T-cell (primary cell): ENCODE measurements at regions of chr4 and their contacts with region 1.

Region 1: DNA sequence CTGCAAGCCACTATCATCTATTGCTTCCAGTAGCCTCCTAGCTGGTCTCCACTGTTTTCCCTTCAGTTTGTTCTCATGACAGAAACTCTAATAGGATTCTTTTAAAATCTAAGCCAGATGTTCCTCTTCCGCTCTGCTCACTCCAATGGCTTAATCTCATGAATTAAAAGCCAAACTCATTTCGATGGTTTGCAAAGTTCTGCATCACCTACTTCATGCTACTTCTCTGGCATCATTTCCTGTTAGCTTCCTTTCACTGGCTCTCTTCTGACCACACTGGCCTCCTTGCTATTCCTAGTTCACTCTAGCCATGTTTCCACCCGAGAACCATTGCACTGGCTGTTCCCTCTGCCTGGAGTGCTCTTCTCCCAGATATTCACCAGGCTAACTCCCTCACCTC is 102.0 kb upstream of the LSM6 start:
- DNase-seq: no peak
- ATAC-seq: no peak
- H3K4me3 ChIP-seq: no peak overlapping the region
- H3K4me3 Mint-ChIP-seq: no peak overlapping the region
- H3K27ac ChIP-seq: no peak overlapping the region
- H3K27ac Mint-ChIP-seq: no peak overlapping the region
- H3K4me1 ChIP-seq: no peaks in the 10 kb centered on the region
- H3K4me1 Mint-ChIP-seq: no peaks in the 10 kb centered on the region
- H3K27me3 ChIP-seq: peaks cover 0 to 6% of the 10 kb centered on the region in 2 experiments
- H3K27me3 Mint-ChIP-seq: peaks cover 17 to 24% of the 10 kb centered on the region in 2 donors

Region 2: DNA sequence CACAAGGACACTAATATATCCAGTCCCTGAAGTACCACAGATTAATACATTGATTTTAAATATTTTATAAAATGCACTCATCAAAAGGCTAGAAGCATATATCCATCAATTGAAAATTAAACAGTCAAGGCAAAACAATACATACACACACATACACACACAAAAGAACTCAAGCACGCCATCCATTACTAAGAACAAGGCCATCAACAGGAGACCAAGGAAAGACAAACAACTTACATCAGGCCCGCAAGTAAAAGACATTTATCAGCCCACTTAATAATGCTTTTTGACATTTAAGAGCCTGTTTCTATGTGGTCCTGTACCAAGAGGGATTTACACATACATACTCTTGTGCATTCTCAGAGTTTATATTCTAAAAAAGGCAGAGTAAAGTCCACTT is 84.9 kb before region 1 on chr4:
- CTCF ChIA-PET with region 1: no interaction called
- POLR2A ChIA-PET with region 1: interaction called in 1 of 2 experiments, 14 read pairs
- DNase-seq: no peak
- ATAC-seq: no peak
- H3K4me3 ChIP-seq: no peak overlapping the region
- H3K4me3 Mint-ChIP-seq: no peak overlapping the region
- H3K27ac ChIP-seq: no peak overlapping the region
- H3K27ac Mint-ChIP-seq: no peak overlapping the region
- H3K4me1 ChIP-seq: no peaks in the 10 kb centered on the region
- H3K4me1 Mint-ChIP-seq: no peaks in the 10 kb centered on the region
- H3K27me3 ChIP-seq: no peaks in the 10 kb centered on the region
- H3K27me3 Mint-ChIP-seq: peaks cover 3 to 5% of the 10 kb centered on the region in 2 donors